Caco-2 (cell line): ENCODE measurements at regions of chr15 and their contacts with region 1.

Region 1: GRCh38 chr15:29170521-29170920 is 99.1 kb downstream of the NSMCE3 start:
- DNase-seq: no peak
- H3K4me3 ChIP-seq: no peak overlapping the region
- H3K4me3 Mint-ChIP-seq: no peak overlapping the region
- H3K27ac Mint-ChIP-seq: no peak overlapping the region
- H3K4me1 ChIP-seq: no peaks in the 10 kb centered on the region
- H3K4me1 Mint-ChIP-seq: no peaks in the 10 kb centered on the region
- H3K27me3 ChIP-seq: no peaks in the 10 kb centered on the region
- H3K27me3 Mint-ChIP-seq: peaks cover 8% of the 10 kb centered on the region
- CTCF ChIP-seq: no peak

Region 2: GRCh38 chr15:28896951-28897350 is 273.6 kb before region 1 on chr15:
- CTCF ChIA-PET with region 1: no interaction called
- POLR2A ChIA-PET with region 1: no interaction called
- intact Hi-C with region 1: no loop called
- DNase-seq: no peak
- H3K4me3 ChIP-seq: no peak overlapping the region
- H3K4me3 Mint-ChIP-seq: no peak overlapping the region
- H3K27ac Mint-ChIP-seq: no peak overlapping the region
- H3K4me1 ChIP-seq: no peaks in the 10 kb centered on the region
- H3K4me1 Mint-ChIP-seq: no peaks in the 10 kb centered on the region
- H3K27me3 ChIP-seq: no peaks in the 10 kb centered on the region
- H3K27me3 Mint-ChIP-seq: peaks cover 13% of the 10 kb centered on the region
- CTCF ChIP-seq: no peak

Region 3: GRCh38 chr15:28942046-28942445 is 228.5 kb before region 1 on chr15:
- CTCF ChIA-PET with region 1: no interaction called
- POLR2A ChIA-PET with region 1: no interaction called
- intact Hi-C with region 1: no loop called
- DNase-seq: no peak
- H3K4me3 ChIP-seq: no peak overlapping the region
- H3K4me3 Mint-ChIP-seq: no peak overlapping the region
- H3K27ac Mint-ChIP-seq: no peak overlapping the region
- H3K4me1 ChIP-seq: no peaks in the 10 kb centered on the region
- H3K4me1 Mint-ChIP-seq: no peaks in the 10 kb centered on the region
- H3K27me3 ChIP-seq: no peaks in the 10 kb centered on the region
- H3K27me3 Mint-ChIP-seq: no peaks in the 10 kb centered on the region
- CTCF ChIP-seq: no peak

Region 4: DNA sequence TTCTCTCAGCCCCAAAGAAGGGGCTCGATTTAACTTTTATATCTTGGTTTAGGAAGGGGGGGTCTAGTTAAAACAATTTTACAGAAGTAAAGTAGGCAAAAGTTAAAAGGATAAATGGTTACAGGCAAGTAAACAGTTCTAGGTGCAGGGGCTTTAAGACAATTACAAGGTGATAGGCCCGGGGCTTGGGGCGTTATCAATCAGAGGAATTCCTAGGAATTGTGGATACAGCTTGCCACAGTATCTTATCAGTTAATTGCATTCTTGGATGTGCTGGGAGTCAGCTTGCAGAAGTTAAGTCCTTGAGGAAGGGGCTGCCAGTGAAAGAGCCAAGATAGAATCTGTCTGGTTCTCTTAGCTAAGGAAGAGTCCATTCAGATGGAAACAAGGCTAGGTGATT is 46.4 kb after region 1 on chr15:
- CTCF ChIA-PET with region 1: no interaction called
- POLR2A ChIA-PET with region 1: no interaction called
- intact Hi-C with region 1: loop called (anchors 1 kb)
- DNase-seq: no peak
- H3K4me3 ChIP-seq: no peak overlapping the region
- H3K4me3 Mint-ChIP-seq: no peak overlapping the region
- H3K27ac Mint-ChIP-seq: no peak overlapping the region
- H3K4me1 ChIP-seq: no peaks in the 10 kb centered on the region
- H3K4me1 Mint-ChIP-seq: peaks cover 11% of the 10 kb centered on the region
- H3K27me3 ChIP-seq: no peaks in the 10 kb centered on the region
- H3K27me3 Mint-ChIP-seq: peaks cover 4% of the 10 kb centered on the region
- CTCF ChIP-seq: no peak